CD4-positive, alpha-beta memory T cell (primary cell): ENCODE measurements at regions of chr19 and their contacts with region 1.

Region 1: GRCh38 chr19:57632987-57633831 is at the start of gene ZNF211:
- DNase-seq: peak; percentile 86 to 91 (median 88)
- H3K4me3 ChIP-seq: peak within 1 kb of the TSS; percentile 84 to 87
- H3K4me3 Mint-ChIP-seq: peak within 1 kb of the TSS; percentile 94 to 98 (median 96)
- H3K27ac ChIP-seq: peak within 1 kb of the TSS; percentile 81
- H3K27ac Mint-ChIP-seq: peak within 1 kb of the TSS; percentile 83 to 96 (median 94)
- H3K4me1 ChIP-seq: peaks cover 19% of the 10 kb centered on the region
- H3K4me1 Mint-ChIP-seq: peaks cover 18 to 35% (median 27%) of the 10 kb centered on the region in 4 donors
- H3K27me3 ChIP-seq: no peaks in the 10 kb centered on the region
- H3K27me3 Mint-ChIP-seq: no peaks in the 10 kb centered on the region
- total RNA-seq, gene ZNF211: 48.7 to 53.3 TPM

Region 2: DNA sequence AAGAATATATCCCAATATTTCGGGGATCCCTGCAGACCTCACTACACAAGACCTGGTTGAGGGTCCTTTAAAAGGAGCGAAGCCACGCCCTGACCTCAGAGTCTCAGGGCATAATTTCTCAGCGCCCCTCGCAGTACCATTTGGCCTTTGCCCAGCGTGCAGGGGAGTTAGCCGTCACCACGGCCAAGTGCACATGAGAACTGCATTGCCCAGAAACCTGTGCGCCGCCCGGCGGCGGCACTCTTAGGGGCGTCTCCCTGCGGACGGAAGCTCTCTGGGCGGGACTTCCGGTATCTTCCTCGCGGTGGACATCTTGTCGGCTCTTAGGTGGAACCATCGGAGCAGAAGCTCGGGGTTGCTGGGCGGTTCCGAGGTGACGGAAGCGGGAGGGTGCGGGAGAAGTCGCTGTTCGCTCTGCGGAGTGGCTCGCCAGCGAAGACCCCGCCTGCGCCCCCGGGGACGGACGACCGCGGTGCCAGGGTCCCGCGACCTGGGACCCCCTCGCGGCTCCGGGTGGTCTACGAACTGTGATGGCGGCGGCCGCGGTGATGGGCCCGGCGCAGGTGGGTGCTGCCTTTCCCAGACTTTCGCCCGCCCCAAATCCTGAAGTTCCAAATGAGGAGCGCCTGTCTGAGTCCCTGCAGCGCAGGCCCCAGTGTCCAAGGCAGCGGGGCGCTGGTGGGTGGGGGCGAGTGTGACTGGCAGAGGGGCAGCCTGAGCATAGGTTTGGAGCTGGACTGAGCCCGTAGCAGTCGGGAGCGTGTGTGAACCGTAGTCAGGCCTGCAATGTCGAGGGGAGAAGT is 19.1 kb before region 1 on chr19 and contains the start of gene ZNF134:
- CTCF ChIA-PET with region 1: no interaction called
- POLR2A ChIA-PET with region 1: interaction called, 16 read pairs
- intact Hi-C with region 1: loop called (anchors 1 kb)
- DNase-seq: peak; percentile 86 to 88 (median 87)
- H3K4me3 ChIP-seq: peak within 1 kb of the TSS; percentile 78 to 92
- H3K4me3 Mint-ChIP-seq: peak within 1 kb of the TSS; percentile 89 to 94 (median 92)
- H3K27ac ChIP-seq: peak within 1 kb of the TSS; percentile 58
- H3K27ac Mint-ChIP-seq: peak within 1 kb of the TSS; percentile 57 to 90 (median 88)
- H3K4me1 ChIP-seq: peaks cover 18% of the 10 kb centered on the region
- H3K4me1 Mint-ChIP-seq: peaks cover 17 to 42% (median 32%) of the 10 kb centered on the region in 4 donors
- H3K27me3 ChIP-seq: no peaks in the 10 kb centered on the region
- H3K27me3 Mint-ChIP-seq: no peaks in the 10 kb centered on the region
- total RNA-seq, gene ZNF134: 32.1 to 32.3 TPM

Region 3: DNA sequence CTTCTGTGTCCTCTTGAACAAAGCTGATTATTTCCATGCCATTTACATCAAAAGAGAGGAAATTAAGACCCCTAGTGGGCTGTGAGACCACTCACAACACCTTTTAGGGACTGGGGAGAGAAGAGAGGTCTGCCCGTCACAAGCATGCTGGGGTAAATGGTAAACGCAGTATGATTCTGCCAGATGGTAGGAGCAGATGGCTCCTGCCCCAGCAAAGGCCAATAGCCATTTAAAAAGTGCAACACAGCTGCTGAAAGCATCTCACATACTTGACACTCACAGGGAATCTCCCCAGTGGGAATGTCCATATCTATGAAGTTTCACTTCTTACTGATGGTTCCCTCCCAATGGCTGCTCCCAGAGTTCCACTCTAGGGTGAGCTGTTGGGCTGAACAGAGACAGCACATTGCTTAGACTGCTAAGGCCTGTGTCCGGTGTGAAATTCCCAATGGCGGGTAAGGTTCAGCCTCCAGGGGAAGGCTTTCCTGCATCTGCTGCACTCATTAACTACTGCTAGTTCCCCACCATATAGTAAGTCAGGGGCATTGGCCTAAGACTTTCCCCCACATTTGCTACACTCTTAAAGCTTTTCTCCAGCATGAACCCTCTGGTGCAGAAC is 86.8 kb after region 1 on chr19:
- CTCF ChIA-PET with region 1: no interaction called
- POLR2A ChIA-PET with region 1: no interaction called
- intact Hi-C with region 1: loop called (anchors 5 kb)
- DNase-seq: no peak
- H3K4me3 ChIP-seq: no peak overlapping the region
- H3K4me3 Mint-ChIP-seq: no peak overlapping the region
- H3K27ac ChIP-seq: no peak overlapping the region
- H3K27ac Mint-ChIP-seq: no peak overlapping the region
- H3K4me1 ChIP-seq: no peaks in the 10 kb centered on the region
- H3K4me1 Mint-ChIP-seq: peaks cover 1 to 9% (median 5%) of the 10 kb centered on the region in 4 donors
- H3K27me3 ChIP-seq: no peaks in the 10 kb centered on the region
- H3K27me3 Mint-ChIP-seq: no peaks in the 10 kb centered on the region

Region 4: DNA sequence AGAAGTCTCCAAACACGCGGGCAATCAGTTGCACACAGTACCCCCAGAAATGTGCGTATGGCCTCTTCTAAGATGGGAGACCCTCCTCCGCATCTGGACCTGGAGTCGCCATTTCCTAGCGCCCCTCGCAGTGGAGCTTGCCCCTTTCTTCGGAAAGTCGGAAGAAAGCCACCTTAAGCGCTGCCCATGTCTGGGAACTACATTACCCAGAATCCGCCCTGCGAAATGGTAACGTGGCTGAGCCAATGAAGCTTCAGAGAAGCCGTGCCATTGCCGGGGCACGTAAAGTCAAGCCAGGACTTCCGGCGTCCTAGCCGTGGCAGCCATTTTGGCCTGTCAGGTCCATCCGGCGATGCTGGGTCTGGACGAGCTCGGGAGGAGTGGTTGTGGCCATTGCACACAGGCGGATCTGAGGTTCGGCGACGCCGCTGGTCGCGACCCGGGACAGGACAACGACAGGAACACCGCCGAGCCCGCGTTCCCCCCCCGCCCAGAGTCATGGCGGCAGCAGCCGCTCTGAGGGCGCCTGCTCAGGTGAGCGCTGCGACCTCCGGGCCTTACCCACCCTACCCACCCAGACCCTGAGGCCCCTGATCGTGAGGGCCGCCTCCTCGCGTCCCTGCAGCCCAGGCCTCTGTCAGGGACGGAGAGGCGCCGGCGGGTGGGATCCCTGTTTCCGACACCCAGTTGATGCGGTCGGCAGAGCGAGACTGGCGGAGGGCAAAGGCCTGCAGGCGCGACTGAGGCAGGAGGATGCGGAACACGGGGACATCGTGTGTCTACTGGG is 136.3 kb after region 1 on chr19 and contains the start of gene ZNF586:
- CTCF ChIA-PET with region 1: no interaction called
- POLR2A ChIA-PET with region 1: interaction called, 6 read pairs
- intact Hi-C with region 1: loop called (anchors 1 kb)
- DNase-seq: peak; percentile 82 to 91 (median 85)
- H3K4me3 ChIP-seq: peak within 1 kb of the TSS; percentile 62 to 75
- H3K4me3 Mint-ChIP-seq: peak within 1 kb of the TSS; percentile 96 to 99 (median 96)
- H3K27ac ChIP-seq: peak within 1 kb of the TSS; percentile 75
- H3K27ac Mint-ChIP-seq: peak within 1 kb of the TSS; percentile 91 to 98 (median 96)
- H3K4me1 ChIP-seq: peaks cover 20% of the 10 kb centered on the region
- H3K4me1 Mint-ChIP-seq: peaks cover 23 to 51% (median 33%) of the 10 kb centered on the region in 4 donors
- H3K27me3 ChIP-seq: no peaks in the 10 kb centered on the region
- H3K27me3 Mint-ChIP-seq: no peaks in the 10 kb centered on the region
- total RNA-seq, gene ZNF586: 46.4 to 51.7 TPM

Region 5: DNA sequence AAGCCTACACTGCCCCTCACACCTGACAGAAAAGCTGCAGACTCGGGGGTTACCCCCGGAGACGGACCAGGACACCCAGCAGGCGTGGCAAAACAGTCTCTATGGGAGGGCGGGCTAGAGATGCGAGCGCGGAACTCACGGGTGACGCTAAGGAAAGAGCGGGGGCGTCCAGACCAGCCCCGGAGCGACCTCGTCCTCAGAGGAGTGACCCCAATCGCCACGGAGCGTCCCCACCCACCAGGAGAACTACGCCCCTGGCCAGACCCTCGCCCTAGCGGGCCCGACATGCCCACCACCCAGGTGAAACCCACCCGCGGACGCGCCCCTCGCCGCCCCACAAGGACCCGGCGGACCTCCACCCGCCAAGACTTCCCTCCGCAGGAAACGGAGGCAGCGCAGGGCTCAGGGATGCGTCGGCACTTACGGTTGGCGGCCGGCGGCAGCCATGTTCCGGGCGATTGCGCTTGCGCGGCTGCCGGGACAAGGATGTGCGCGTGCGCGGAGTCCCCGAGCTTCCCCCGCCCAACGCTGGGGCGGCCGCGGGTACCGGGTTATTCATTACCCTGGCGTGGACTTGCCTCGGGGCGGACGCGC is 517.2 kb after region 1 on chr19 and contains the start of gene ZNF329:
- CTCF ChIA-PET with region 1: no interaction called
- POLR2A ChIA-PET with region 1: no interaction called
- intact Hi-C with region 1: no loop called
- DNase-seq: peak; percentile 85 to 90 (median 88)
- H3K4me3 ChIP-seq: peak within 1 kb of the TSS; percentile 63 to 90
- H3K4me3 Mint-ChIP-seq: peak within 1 kb of the TSS; percentile 89 to 95 (median 92)
- H3K27ac ChIP-seq: peak within 1 kb of the TSS; percentile 85
- H3K27ac Mint-ChIP-seq: peak within 1 kb of the TSS; percentile 61 to 96 (median 88)
- H3K4me1 ChIP-seq: peaks cover 23% of the 10 kb centered on the region
- H3K4me1 Mint-ChIP-seq: peaks cover 9 to 34% (median 16%) of the 10 kb centered on the region in 4 donors
- H3K27me3 ChIP-seq: no peaks in the 10 kb centered on the region
- H3K27me3 Mint-ChIP-seq: no peaks in the 10 kb centered on the region
- total RNA-seq, gene ZNF329: 14.2 to 17.4 TPM